Heart right ventricle (tissue), 16 donors: ENCODE measurements at regions of chrX and their contacts with region 1.

Region 1: DNA sequence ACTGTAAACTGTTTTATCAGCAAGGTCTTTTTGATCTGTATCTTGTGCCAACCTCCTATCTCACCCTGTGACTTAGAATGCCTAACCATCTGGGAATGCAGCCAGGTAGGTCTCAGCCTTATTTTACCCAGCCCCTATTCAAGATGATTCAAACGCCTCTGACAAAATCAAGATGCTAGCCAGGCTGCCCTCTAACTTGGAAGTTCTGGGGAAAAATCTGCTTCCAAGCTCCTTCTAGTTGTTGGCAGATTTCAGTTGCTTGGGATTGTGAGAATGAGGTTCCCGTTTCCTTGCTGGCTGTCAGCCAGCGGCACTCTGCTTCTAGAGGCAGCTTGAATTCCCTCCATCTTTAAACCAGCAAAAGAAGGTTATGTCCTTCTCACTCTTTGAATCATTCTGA is 34.7 kb downstream of the LUZP4 start:
- DNase-seq: peak; percentile 6 to 40
- ATAC-seq: no peak
- H3K4me3 ChIP-seq: no peak overlapping the region
- H3K27ac ChIP-seq: peak overlapping the region in 1 of 10 donors; percentile 6
- H3K4me1 ChIP-seq: no peaks in the 10 kb centered on the region
- H3K27me3 ChIP-seq: peaks cover 0 to 34% (median 0%) of the 10 kb centered on the region in 7 donors
- CTCF ChIP-seq: no peak

Region 2: DNA sequence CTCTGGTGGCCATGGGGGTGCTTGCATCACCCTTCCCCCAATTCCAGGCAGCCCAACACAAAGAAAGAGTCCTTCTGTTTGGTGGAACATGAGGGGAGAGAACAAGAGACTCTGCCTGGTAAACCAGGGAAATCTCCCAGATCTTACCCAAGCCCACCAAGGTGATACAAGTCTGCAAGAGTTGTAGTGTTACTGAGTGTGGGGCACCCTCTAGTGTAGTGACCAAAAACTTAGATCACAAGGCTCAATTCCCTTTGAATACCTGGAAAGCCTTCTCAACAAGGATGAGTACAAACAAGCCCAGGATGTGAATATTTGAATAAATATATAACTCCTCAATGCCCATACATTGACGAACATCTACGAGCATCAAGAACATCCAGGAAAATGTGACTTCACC is 371.5 kb before region 1 on chrX:
- intact Hi-C with region 1: no loop called
- DNase-seq: no peak
- ATAC-seq: no peak
- H3K4me3 ChIP-seq: no peak overlapping the region
- H3K27ac ChIP-seq: no peak overlapping the region
- H3K4me1 ChIP-seq: no peaks in the 10 kb centered on the region
- H3K27me3 ChIP-seq: peaks cover 0 to 18% (median 0%) of the 10 kb centered on the region in 7 donors
- CTCF ChIP-seq: no peak

Region 3: GRCh38 chrX:115679460-115679859 is 355.3 kb after region 1 on chrX:
- intact Hi-C with region 1: loop called in 2 of 10 experiments (anchors 10 kb)
- DNase-seq: no peak
- ATAC-seq: no peak
- H3K4me3 ChIP-seq: no peak overlapping the region
- H3K27ac ChIP-seq: no peak overlapping the region
- H3K4me1 ChIP-seq: no peaks in the 10 kb centered on the region
- H3K27me3 ChIP-seq: peaks cover 0 to 52% (median 0%) of the 10 kb centered on the region in 7 donors
- CTCF ChIP-seq: peak in 8 of 9 donors; percentile 7 to 53 (median 44)

Region 4: DNA sequence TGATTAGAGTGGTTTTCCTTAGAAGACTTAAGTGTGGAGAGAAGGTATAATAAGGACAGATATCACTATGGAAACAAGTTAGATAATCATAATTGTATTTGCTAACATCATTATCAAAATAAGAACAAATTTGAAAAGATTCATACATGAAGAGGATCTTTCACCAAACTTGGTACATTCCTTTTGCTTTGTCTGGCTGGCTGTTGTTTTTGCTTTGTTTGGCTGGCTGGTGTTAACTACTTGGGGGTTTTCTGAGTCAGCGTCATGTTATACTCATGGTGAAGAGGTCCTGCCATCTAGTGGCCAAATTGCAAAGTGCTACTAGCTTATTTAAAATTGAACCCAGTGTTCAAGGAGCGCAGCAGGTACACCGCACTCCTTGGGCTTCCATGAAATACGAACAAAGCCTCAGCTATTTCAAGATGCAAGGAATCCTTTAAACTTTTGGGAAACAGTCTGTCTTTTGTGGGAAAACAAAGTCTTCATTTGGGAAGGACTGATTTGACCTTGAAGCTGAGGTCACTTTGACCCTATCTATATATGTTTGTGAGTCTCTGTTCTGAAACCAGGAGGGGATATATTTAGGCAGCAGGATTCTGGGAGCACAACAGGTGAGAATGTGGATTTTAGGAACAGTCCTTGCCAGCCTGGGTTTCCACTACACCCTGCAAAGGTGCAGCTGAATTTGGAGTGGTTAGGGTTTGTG is 366.5 kb after region 1 on chrX:
- intact Hi-C with region 1: loop called in 2 of 10 experiments (anchors 5 to 10 kb)
- DNase-seq: peak in 1 of 2 donors; percentile 57
- ATAC-seq: peak in 6 of 8 donors; percentile 64 to 80 (median 68)
- H3K4me3 ChIP-seq: no peak overlapping the region
- H3K27ac ChIP-seq: peak overlapping the region in 3 of 10 donors; percentile 8 to 68 (median 10)
- H3K4me1 ChIP-seq: peaks cover 0 to 7% (median 0%) of the 10 kb centered on the region in 9 donors
- H3K27me3 ChIP-seq: peaks cover 0 to 72% (median 0%) of the 10 kb centered on the region in 7 donors
- CTCF ChIP-seq: peak; percentile 61 to 89 (median 70)